Spleen (tissue), 13 donors: ENCODE measurements at regions of chr17 and their contacts with region 1.

Region 1: GRCh38 chr17:43576563-43577229 is 30.6 kb upstream of the ETV4 start:
- DNase-seq: peak; percentile 87
- H3K4me3 ChIP-seq: no peak overlapping the region
- H3K27ac ChIP-seq: peak overlapping the region in 2 of 8 donors; percentile 71 to 81
- H3K4me1 ChIP-seq: peaks cover 19 to 53% (median 44%) of the 10 kb centered on the region in 6 donors
- H3K27me3 ChIP-seq: peaks cover 0 to 11% (median 0%) of the 10 kb centered on the region in 7 donors
- CTCF ChIP-seq: peak; percentile 69 to 91 (median 86)
- POLR2A ChIP-seq: no peak

Region 2: GRCh38 chr17:43042025-43042628 is 534.6 kb before region 1 on chr17:
- intact Hi-C with region 1: no loop called
- DNase-seq: no peak
- H3K4me3 ChIP-seq: no peak overlapping the region
- H3K27ac ChIP-seq: no peak overlapping the region
- H3K4me1 ChIP-seq: no peaks in the 10 kb centered on the region
- H3K27me3 ChIP-seq: no peaks in the 10 kb centered on the region
- CTCF ChIP-seq: no peak
- POLR2A ChIP-seq: no peak

Region 3: GRCh38 chr17:43673516-43674323 is 97.0 kb after region 1 on chr17:
- intact Hi-C with region 1: loop called (anchors 2 kb)
- DNase-seq: peak; percentile 84
- H3K4me3 ChIP-seq: no peak overlapping the region
- H3K27ac ChIP-seq: peak overlapping the region in 2 of 8 donors; percentile 22 to 31
- H3K4me1 ChIP-seq: peaks cover 12 to 50% (median 32%) of the 10 kb centered on the region in 6 donors
- H3K27me3 ChIP-seq: no peaks in the 10 kb centered on the region
- CTCF ChIP-seq: peak; percentile 73 to 95 (median 90)
- POLR2A ChIP-seq: no peak

Region 4: DNA sequence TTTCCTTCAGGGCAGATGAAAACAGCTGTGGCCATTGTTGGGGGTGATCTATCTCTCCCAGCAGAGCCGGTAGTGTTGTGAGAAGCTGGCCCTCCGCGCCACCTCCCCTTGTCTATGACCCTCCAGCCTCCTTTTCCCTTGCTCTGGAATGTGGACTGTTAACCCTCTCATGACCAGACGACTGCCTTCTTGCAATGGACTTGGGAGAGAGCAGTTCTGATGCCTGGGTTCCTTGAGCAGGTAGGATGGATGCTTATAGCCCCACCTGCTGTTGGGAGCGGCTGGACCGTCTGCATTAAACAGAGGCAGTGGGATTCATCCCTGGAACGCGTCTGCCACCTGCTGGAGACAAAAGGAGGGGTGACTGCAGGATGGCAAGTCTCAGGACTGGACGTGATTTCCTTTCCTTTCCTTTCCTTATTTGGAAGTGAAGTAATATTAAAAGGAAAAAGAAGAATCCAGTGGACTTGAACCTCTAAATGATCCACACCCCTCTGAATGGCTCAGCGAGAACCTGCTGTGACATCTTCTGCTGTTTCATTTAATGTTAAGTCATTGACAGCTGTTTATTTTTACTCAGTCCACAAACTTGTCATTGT is 183.7 kb after region 1 on chr17:
- intact Hi-C with region 1: loop called (anchors 10 kb)
- DNase-seq: peak; percentile 95
- H3K4me3 ChIP-seq: no peak overlapping the region
- H3K27ac ChIP-seq: no peak overlapping the region
- H3K4me1 ChIP-seq: peaks cover 4 to 26% (median 9%) of the 10 kb centered on the region in 6 donors
- H3K27me3 ChIP-seq: peaks cover 0 to 38% (median 11%) of the 10 kb centered on the region in 7 donors
- CTCF ChIP-seq: peak; percentile 90 to 99 (median 96)
- POLR2A ChIP-seq: no peak